AG04450 (cell line): ENCODE measurements at regions of chr5 and their contacts with region 1.

Region 1: GRCh38 chr5:112848116-112848811 is 12.8 kb upstream of the SRP19 start:
- DNase-seq: peak; percentile 32
- H3K4me3 ChIP-seq: no peak overlapping the region
- H3K27ac ChIP-seq: peak overlapping the region; percentile 42
- H3K27me3 ChIP-seq: no peaks in the 10 kb centered on the region
- CTCF ChIP-seq: peak; percentile 76

Region 2: GRCh38 chr5:112551419-112552032 is 296.7 kb before region 1 on chr5:
- CTCF ChIA-PET with region 1: interaction called, 27 read pairs
- POLR2A ChIA-PET with region 1: no interaction called
- DNase-seq: peak; percentile 20
- H3K4me3 ChIP-seq: no peak overlapping the region
- H3K27ac ChIP-seq: no peak overlapping the region
- H3K27me3 ChIP-seq: peaks cover 4% of the 10 kb centered on the region
- CTCF ChIP-seq: peak; percentile 74

Region 3: DNA sequence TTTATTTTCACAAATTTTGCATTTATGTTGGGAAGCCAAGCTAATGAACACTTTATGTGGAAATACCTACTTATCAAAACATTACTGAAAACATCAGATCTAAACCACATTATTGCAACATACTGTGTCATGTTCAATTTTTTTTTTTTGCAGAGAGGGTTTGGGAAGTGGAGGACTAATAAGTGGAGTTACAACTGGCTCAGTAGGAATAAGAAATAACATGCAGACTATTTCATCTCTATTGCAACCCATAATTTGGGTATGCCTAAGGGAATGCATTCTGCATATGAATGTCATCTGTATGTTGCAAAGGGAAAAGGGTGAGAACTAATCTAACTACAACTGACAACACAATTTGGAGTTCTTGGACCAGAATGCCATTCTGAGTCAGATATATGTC is 68.7 kb before region 1 on chr5:
- CTCF ChIA-PET with region 1: interaction called, 10 read pairs
- POLR2A ChIA-PET with region 1: no interaction called
- DNase-seq: no peak
- H3K4me3 ChIP-seq: no peak overlapping the region
- H3K27ac ChIP-seq: no peak overlapping the region
- H3K27me3 ChIP-seq: no peaks in the 10 kb centered on the region
- CTCF ChIP-seq: no peak

Region 4: DNA sequence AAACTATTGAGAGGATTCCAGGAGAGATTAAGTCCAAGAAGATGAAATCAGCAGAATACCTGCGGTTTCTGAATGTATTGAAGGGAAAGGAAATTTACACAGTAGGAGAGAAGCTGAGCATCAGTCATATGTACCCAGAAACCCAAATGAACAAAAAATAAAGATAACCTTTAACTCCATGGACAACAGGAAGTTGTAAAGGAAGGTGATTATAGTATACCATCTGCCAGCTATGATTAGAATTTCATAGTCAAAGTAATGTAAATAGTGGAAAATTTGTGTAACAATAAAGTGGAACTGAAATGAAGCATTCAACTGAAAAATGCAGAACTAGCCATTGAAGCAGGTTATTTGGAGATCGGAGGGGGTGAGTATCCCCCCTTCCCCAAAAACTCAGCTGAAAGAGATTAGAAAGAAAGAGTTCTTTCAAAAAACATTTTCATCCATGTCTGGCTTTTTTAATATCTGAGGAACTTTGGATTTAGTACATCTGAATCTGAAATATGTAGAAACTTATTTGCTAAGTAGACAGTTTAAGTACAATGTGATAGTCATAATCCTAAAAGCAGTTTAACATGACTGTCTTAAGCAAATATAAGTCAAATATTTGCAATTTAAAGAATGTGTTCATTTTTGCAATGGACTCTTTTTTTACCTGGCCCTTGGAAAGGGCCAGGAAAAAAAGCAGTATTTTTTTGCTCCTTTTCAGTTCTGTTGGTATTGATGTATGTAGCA is 52.2 kb before region 1 on chr5:
- CTCF ChIA-PET with region 1: interaction called, 13 read pairs
- POLR2A ChIA-PET with region 1: no interaction called
- DNase-seq: no peak
- H3K4me3 ChIP-seq: no peak overlapping the region
- H3K27ac ChIP-seq: no peak overlapping the region
- H3K27me3 ChIP-seq: no peaks in the 10 kb centered on the region
- CTCF ChIP-seq: no peak

Region 5: GRCh38 chr5:112823623-112824596 is 24.4 kb before region 1 on chr5:
- CTCF ChIA-PET with region 1: interaction called, 13 read pairs
- POLR2A ChIA-PET with region 1: no interaction called
- DNase-seq: no peak
- H3K4me3 ChIP-seq: no peak overlapping the region
- H3K27ac ChIP-seq: no peak overlapping the region
- H3K27me3 ChIP-seq: no peaks in the 10 kb centered on the region
- CTCF ChIP-seq: no peak

Region 6: GRCh38 chr5:112860929-112861637 is 12.8 kb after region 1 on chr5 and contains the start of gene SRP19:
- CTCF ChIA-PET with region 1: interaction called, 18 read pairs
- POLR2A ChIA-PET with region 1: interaction called, 8 read pairs
- DNase-seq: peak; percentile 96
- H3K4me3 ChIP-seq: peak within 1 kb of the TSS; percentile 97
- H3K27ac ChIP-seq: peak within 1 kb of the TSS; percentile 84
- H3K27me3 ChIP-seq: no peaks in the 10 kb centered on the region
- CTCF ChIP-seq: no peak
- polyA plus RNA-seq, gene SRP19: 98.6 and 149 TPM in 2 replicates